Caco-2 (cell line): ENCODE measurements at regions of chr11 and their contacts with region 1.

Region 1: GRCh38 chr11:91435694-91436395 is 788.8 kb upstream of the FAT3 start:
- DNase-seq: no peak
- H3K4me3 ChIP-seq: no peak overlapping the region
- H3K4me3 Mint-ChIP-seq: no peak overlapping the region
- H3K27ac Mint-ChIP-seq: no peak overlapping the region
- H3K4me1 ChIP-seq: no peaks in the 10 kb centered on the region
- H3K4me1 Mint-ChIP-seq: no peaks in the 10 kb centered on the region
- H3K27me3 ChIP-seq: no peaks in the 10 kb centered on the region
- H3K27me3 Mint-ChIP-seq: no peaks in the 10 kb centered on the region
- CTCF ChIP-seq: peak in 1 of 2 experiments; percentile 18

Region 2: GRCh38 chr11:91365986-91366585 is 69.8 kb before region 1 on chr11:
- CTCF ChIA-PET with region 1: no interaction called
- POLR2A ChIA-PET with region 1: no interaction called
- intact Hi-C with region 1: no loop called
- DNase-seq: no peak
- H3K4me3 ChIP-seq: no peak overlapping the region
- H3K4me3 Mint-ChIP-seq: no peak overlapping the region
- H3K27ac Mint-ChIP-seq: no peak overlapping the region
- H3K4me1 ChIP-seq: no peaks in the 10 kb centered on the region
- H3K4me1 Mint-ChIP-seq: no peaks in the 10 kb centered on the region
- H3K27me3 ChIP-seq: no peaks in the 10 kb centered on the region
- H3K27me3 Mint-ChIP-seq: no peaks in the 10 kb centered on the region
- CTCF ChIP-seq: no peak

Region 3: GRCh38 chr11:91446267-91446666 is 10.4 kb after region 1 on chr11:
- CTCF ChIA-PET with region 1: no interaction called
- POLR2A ChIA-PET with region 1: no interaction called
- intact Hi-C with region 1: no loop called
- DNase-seq: no peak
- H3K4me3 ChIP-seq: no peak overlapping the region
- H3K4me3 Mint-ChIP-seq: no peak overlapping the region
- H3K27ac Mint-ChIP-seq: no peak overlapping the region
- H3K4me1 ChIP-seq: no peaks in the 10 kb centered on the region
- H3K4me1 Mint-ChIP-seq: no peaks in the 10 kb centered on the region
- H3K27me3 ChIP-seq: no peaks in the 10 kb centered on the region
- H3K27me3 Mint-ChIP-seq: no peaks in the 10 kb centered on the region
- CTCF ChIP-seq: no peak

Region 4: GRCh38 chr11:91749231-91749630 is 313.4 kb after region 1 on chr11:
- CTCF ChIA-PET with region 1: no interaction called
- POLR2A ChIA-PET with region 1: no interaction called
- intact Hi-C with region 1: loop called (anchors 10 kb)
- DNase-seq: no peak
- H3K4me3 ChIP-seq: no peak overlapping the region
- H3K4me3 Mint-ChIP-seq: no peak overlapping the region
- H3K27ac Mint-ChIP-seq: no peak overlapping the region
- H3K4me1 ChIP-seq: peaks cover 5% of the 10 kb centered on the region; the same call in 1 of the 2 replicates
- H3K4me1 Mint-ChIP-seq: no peaks in the 10 kb centered on the region
- H3K27me3 ChIP-seq: no peaks in the 10 kb centered on the region
- H3K27me3 Mint-ChIP-seq: no peaks in the 10 kb centered on the region
- CTCF ChIP-seq: no peak

Region 5: GRCh38 chr11:92070026-92070889 is 634.4 kb after region 1 on chr11:
- CTCF ChIA-PET with region 1: no interaction called
- POLR2A ChIA-PET with region 1: no interaction called
- intact Hi-C with region 1: loop called (anchors 5 kb)
- DNase-seq: no peak
- H3K4me3 ChIP-seq: no peak overlapping the region
- H3K4me3 Mint-ChIP-seq: no peak overlapping the region
- H3K27ac Mint-ChIP-seq: no peak overlapping the region
- H3K4me1 ChIP-seq: no peaks in the 10 kb centered on the region
- H3K4me1 Mint-ChIP-seq: no peaks in the 10 kb centered on the region
- H3K27me3 ChIP-seq: no peaks in the 10 kb centered on the region
- H3K27me3 Mint-ChIP-seq: peaks cover 4% of the 10 kb centered on the region
- CTCF ChIP-seq: peak in 1 of 2 experiments; percentile 18